ENCODE measurements at regions of chr22 and their contacts with region 1.

Region 1: GRCh38 chr22:31550866-31551390 is 54.6 kb downstream of the SFI1 start:
- DNase-seq: no peak
- H3K4me3 Mint-ChIP-seq: no peak overlapping the region
- H3K27ac Mint-ChIP-seq: peak overlapping the region; percentile 1
- H3K4me1 Mint-ChIP-seq: peaks cover 29% of the 10 kb centered on the region
- H3K27me3 Mint-ChIP-seq: no peaks in the 10 kb centered on the region

Region 2: GRCh38 chr22:30829901-30830550 is 720.9 kb before region 1 on chr22:
- intact Hi-C with region 1: no loop called
- DNase-seq: no peak
- H3K4me3 Mint-ChIP-seq: no peak overlapping the region
- H3K27ac Mint-ChIP-seq: no peak overlapping the region
- H3K4me1 Mint-ChIP-seq: peaks cover 3% of the 10 kb centered on the region
- H3K27me3 Mint-ChIP-seq: peaks cover 11% of the 10 kb centered on the region

Region 3: GRCh38 chr22:31585161-31585859 is 34.4 kb after region 1 on chr22:
- intact Hi-C with region 1: loop called (anchors 5 kb)
- DNase-seq: peak; percentile 67
- H3K4me3 Mint-ChIP-seq: peak overlapping the region; percentile 35
- H3K27ac Mint-ChIP-seq: peak overlapping the region; percentile 88
- H3K4me1 Mint-ChIP-seq: peaks cover 44% of the 10 kb centered on the region
- H3K27me3 Mint-ChIP-seq: no peaks in the 10 kb centered on the region

Measured in activated CD4-positive, alpha-beta T cell treated with anti-CD3 and anti-CD28 coated beads, Interleukin-2, amount 10 ng/mL, durations not matched to agents 24 days and 14 days (primary cell).